Kidney (tissue), 22 donors: ENCODE measurements at regions of chr18 and their contacts with region 1.

Region 1: DNA sequence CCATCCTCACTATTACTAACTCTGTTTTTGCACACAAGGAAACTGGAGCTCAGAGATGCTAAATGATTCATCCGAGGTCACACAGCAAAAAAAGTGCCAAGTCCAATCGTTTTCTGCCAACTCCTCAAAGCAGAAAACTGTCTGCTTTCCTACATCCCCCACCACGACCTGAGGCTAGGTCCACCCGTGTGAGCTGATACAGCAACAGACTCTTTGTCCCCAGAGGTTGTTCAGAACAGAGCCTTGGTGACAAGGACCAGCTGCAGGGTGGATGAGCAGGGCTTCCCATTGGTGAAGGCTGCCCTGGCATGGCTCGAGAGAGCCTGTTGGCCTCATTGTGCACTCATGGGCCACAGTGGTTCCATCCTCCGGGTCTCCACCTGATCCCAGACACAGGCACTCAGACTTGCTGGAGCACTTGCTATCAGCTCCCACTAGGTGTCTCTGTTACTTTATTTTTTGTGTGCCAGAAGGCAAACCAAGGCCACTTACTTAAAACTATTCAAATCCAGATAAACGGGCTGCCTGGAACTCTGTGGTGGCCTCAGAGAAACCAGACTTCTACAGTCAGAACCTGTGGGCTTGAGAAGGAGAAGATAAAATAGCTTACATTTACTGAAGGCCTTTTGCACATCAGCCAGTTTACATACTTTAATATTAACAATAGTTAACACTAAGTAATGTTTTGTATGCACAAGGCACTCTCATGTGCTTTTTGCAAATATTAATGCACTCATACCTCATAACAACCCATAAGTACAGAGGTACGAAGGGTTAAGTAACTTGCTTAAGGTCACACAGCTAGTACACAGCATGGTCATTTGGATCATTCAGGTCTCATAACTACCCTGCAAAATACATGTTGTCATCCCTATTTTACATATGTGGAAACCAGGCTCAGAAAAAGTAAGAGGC is 62.9 kb upstream of the CTIF start:
- DNase-seq: peak in 4 of 5 donors; percentile 69 to 86 (median 76)
- H3K4me3 ChIP-seq: no peak overlapping the region
- H3K27ac ChIP-seq: no peak overlapping the region
- H3K4me1 ChIP-seq: peaks cover 0 to 2% (median 0%) of the 10 kb centered on the region in 3 donors
- H3K27me3 ChIP-seq: no peaks in the 10 kb centered on the region
- CTCF ChIP-seq: peak; percentile 91

Region 2: DNA sequence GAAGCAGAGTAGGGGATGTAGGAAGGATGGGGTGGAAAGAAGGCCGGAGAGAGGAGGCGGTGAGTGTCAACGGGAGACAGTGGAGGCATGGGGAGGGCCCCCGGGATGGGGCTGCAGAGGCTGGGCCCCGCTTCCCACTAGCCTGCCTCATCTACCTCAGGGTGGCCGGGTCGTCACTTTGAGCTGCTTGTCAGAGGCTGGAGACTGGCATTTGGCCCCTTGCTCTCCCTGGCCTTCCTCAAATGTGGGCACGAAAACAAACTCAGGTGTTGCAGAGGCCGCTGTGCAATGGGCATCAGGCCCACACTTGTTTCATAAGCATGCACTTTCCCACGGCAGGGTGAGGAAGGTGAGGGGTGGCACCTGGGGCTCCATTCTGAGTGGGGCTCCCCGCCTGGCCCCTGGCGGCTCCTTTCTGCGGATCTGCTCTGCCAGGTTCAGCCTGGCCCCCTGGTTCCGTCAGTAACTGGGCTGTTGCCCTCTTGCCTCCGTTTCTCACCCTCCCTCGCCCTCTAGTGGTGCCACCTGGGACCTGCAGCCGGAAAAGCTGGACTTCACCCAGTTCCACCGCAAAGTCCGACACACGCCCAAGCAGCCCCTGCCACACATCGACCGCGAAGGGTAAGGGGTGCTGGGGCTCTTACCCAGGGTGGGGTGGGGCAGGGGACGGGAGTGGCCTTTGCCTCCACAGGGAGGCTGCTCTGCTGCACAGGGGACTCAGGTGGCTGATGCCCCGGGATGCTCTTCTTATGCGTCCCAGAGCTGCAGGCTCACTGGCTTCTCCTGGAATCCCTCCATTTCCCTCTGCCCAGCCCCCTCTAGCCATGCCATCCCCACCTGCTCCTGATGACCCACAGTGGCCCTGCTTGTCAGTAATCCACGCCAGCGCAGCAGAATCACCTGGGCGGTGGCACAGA is 188.3 kb after region 1 on chr18:
- intact Hi-C with region 1: loop called (anchors 5 kb)
- DNase-seq: peak in 4 of 5 donors; percentile 55 to 83 (median 68)
- H3K4me3 ChIP-seq: no peak overlapping the region
- H3K27ac ChIP-seq: no peak overlapping the region
- H3K4me1 ChIP-seq: peaks cover 0 to 7% (median 5%) of the 10 kb centered on the region in 3 donors
- H3K27me3 ChIP-seq: no peaks in the 10 kb centered on the region
- CTCF ChIP-seq: peak; percentile 94